T-cell (primary cell): ENCODE measurements at regions of chr11 and their contacts with region 1.

Region 1: DNA sequence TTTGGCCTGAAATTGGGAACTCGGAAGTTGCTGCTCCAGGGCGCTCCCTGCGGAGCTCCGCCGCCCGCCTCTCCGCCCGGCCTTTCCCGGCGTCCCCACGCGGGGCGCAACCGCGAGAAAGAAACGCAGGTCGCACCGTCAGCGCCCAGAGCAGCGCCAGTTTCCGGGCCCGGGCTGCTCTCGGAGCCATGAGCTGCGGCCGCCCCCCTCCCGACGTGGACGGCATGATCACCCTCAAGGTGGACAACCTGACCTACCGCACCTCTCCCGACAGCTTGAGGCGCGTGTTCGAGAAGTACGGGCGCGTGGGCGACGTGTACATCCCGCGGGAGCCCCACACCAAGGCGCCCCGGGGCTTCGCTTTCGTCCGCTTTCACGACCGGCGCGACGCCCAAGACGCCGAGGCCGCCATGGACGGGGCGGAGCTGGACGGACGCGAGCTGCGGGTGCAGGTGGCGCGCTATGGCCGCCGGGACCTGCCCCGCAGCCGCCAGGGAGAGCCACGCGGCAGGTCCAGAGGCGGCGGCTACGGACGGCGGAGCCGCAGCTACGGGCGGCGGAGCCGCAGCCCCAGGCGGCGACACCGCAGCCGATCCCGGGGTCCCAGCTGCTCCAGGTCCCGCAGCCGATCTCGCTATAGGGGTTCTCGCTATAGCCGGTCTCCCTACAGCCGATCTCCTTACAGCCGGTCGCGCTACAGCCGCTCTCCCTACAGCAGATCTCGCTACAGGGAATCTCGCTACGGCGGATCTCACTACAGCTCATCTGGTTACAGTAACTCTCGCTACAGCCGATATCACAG is 521 bp downstream of the SRSF8 start:
- DNase-seq: peak; percentile 34 to 83 (median 60)
- ATAC-seq: peak; percentile 74 to 78 (median 77)
- H3K4me3 ChIP-seq: peak overlapping the region; percentile 72 to 93
- H3K4me3 Mint-ChIP-seq: peak overlapping the region; percentile 94 to 100 (median 97)
- H3K27ac ChIP-seq: peak overlapping the region; percentile 91
- H3K27ac Mint-ChIP-seq: peak overlapping the region; percentile 97 to 99
- H3K4me1 ChIP-seq: peaks cover 9% of the 10 kb centered on the region in 2 experiments
- H3K4me1 Mint-ChIP-seq: peaks cover 30 to 40% (median 31%) of the 10 kb centered on the region in 3 donors
- H3K27me3 ChIP-seq: no peaks in the 10 kb centered on the region
- H3K27me3 Mint-ChIP-seq: no peaks in the 10 kb centered on the region

Region 2: DNA sequence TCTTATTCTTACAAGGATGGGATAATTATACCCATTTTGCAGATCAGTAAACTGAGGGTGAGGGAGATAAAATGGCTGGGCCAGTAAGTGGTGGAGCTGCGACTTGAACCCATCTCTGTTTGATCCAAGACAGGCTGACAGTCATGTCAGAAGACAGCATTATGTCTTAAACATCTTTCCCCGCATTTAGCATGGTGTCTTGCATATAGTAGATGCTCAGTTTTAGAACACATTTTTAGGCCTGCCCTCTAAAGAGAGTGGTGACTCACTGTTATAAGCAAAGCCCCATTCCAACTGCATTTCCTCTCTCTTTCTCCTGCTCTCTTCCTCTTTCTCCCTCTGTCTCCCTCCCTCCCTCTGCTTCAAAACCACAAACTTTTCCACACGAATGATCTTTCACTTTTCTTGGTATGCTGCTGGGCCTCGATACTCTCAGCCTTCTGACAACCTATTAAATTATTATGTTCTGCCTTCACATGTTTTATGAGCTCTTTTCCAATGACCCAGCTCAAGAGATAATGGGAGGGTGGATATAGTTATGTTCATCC is 119.1 kb before region 1 on chr11:
- CTCF ChIA-PET with region 1: no interaction called
- POLR2A ChIA-PET with region 1: no interaction called
- DNase-seq: no peak
- ATAC-seq: no peak
- H3K4me3 ChIP-seq: no peak overlapping the region
- H3K4me3 Mint-ChIP-seq: no peak overlapping the region
- H3K27ac ChIP-seq: no peak overlapping the region
- H3K27ac Mint-ChIP-seq: no peak overlapping the region
- H3K4me1 ChIP-seq: no peaks in the 10 kb centered on the region
- H3K4me1 Mint-ChIP-seq: peaks cover 0 to 2% (median 0%) of the 10 kb centered on the region in 3 donors
- H3K27me3 ChIP-seq: peaks cover 0 to 2% of the 10 kb centered on the region in 2 experiments
- H3K27me3 Mint-ChIP-seq: peaks cover 2 to 3% of the 10 kb centered on the region in 2 donors

Region 3: DNA sequence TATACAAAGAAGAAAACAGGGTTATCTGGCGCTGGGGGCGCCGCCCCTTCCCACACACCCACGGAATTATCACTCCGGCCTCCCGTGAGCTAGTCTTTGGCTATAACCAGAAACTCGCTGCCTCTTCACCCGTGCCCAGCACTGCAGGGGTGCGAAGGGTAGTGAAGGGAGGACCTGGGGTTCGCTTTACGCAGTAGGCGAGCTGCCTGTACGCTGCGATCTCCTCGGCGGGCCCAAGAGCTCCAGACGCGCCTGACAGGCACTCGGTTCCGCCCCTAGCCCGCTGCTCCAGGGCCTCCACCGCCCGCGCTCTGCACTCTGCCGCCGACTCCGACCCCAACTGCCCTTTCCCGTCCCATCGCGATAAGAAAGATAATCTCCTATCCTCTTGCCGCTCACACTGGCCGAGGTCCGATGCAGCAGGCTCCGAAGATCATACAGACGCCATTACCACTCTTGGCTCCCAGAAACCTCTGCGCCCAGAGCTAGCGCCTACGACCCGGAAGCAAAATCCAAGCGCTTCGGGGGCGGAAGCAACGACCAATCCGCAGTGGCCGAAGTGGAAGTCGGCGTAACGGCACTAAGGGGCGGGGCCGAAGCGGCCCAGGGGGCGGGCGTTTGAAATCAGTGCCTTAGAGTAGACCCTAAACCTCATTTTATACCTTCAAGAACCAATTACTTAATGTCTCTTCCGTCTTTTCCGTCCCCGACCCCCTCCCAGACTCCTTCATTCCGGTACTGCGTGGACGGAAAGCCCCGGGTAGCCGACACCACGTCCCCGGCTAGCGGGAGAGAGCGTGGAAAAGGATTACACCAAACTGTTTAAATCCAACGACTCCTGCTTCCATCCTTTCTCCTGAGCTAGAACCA is 93.9 kb before region 1 on chr11 and contains the starts of genes CWC15 and KDM4D:
- CTCF ChIA-PET with region 1: interaction called, 3 to 14 read pairs
- POLR2A ChIA-PET with region 1: interaction called, 3 to 4 read pairs
- DNase-seq: peak; percentile 89 to 96 (median 94)
- ATAC-seq: peak; percentile 99 to 100 (median 99)
- H3K4me3 ChIP-seq: peak within 1 kb of the TSS; percentile 88 to 95
- H3K4me3 Mint-ChIP-seq: peak within 1 kb of the TSS; percentile 94 to 99 (median 97)
- H3K27ac ChIP-seq: peak within 1 kb of the TSS; percentile 71
- H3K27ac Mint-ChIP-seq: peak within 1 kb of the TSS; percentile 93 to 96
- H3K4me1 ChIP-seq: peaks cover 3 to 8% of the 10 kb centered on the region in 2 experiments
- H3K4me1 Mint-ChIP-seq: peaks cover 33 to 40% (median 37%) of the 10 kb centered on the region in 3 donors
- H3K27me3 ChIP-seq: no peaks in the 10 kb centered on the region
- H3K27me3 Mint-ChIP-seq: no peaks in the 10 kb centered on the region
- total RNA-seq, gene CWC15: 56.4 to 91.0 (median 64.1) TPM
- total RNA-seq, gene KDM4D: 0.33 to 0.57 (median 0.50) TPM

Region 4: DNA sequence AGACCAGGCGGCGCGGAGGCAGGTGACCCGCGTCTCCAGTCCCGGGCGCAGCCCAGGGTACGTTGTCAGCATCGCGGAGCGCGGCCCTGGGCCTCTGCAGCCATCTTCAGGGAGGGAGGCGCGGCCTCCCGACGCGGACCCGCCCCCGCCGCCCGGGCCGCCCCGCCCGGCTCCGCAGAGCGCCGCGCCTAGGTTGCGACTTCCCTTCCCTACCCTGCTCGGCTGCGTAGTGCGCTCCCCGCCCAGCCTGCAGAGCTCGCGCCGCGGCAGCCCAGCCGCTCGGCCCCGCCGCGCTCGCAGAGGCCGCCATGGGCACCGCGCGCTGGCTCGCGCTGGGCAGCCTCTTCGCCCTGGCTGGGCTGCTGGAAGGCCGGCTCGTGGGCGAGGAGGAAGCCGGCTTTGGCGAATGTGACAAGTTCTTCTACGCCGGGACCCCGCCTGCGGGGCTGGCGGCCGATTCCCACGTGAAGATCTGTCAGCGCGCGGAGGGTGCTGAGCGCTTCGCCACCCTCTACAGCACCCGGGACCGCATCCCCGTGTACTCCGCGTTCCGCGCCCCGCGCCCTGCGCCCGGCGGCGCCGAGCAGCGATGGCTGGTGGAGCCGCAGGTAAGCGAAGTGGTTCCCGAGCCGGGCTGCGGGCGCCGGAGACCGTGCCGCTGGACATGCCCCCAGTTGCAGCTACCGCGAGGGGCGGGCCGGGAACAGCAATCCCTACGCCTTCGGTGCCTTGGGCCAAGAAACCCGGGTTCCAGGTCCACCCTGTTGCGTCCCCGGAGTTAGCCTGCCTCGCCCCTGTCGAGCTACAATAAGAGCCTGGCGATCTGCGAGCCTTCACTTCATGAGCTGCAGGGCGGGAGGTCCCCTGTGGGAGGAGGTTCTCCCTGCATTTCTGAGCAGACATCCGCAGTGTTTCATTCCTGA is 22.6 kb after region 1 on chr11 and contains the start of gene ENDOD1:
- CTCF ChIA-PET with region 1: interaction called, 10 to 73 read pairs
- POLR2A ChIA-PET with region 1: interaction called, 4 to 33 read pairs
- DNase-seq: peak; percentile 75 to 92 (median 83)
- ATAC-seq: peak; percentile 94 to 98 (median 95)
- H3K4me3 ChIP-seq: peak within 1 kb of the TSS; percentile 67 to 76
- H3K4me3 Mint-ChIP-seq: peak within 1 kb of the TSS; percentile 82 to 90 (median 90)
- H3K27ac ChIP-seq: peak within 1 kb of the TSS; percentile 80
- H3K27ac Mint-ChIP-seq: peak within 1 kb of the TSS; percentile 89 to 99
- H3K4me1 ChIP-seq: peaks cover 5 to 31% of the 10 kb centered on the region in 2 experiments
- H3K4me1 Mint-ChIP-seq: peaks cover 37 to 59% (median 50%) of the 10 kb centered on the region in 3 donors
- H3K27me3 ChIP-seq: no peaks in the 10 kb centered on the region
- H3K27me3 Mint-ChIP-seq: no peaks in the 10 kb centered on the region
- total RNA-seq, gene ENDOD1: 7.4 to 13.1 (median 9.8) TPM

Region 5: DNA sequence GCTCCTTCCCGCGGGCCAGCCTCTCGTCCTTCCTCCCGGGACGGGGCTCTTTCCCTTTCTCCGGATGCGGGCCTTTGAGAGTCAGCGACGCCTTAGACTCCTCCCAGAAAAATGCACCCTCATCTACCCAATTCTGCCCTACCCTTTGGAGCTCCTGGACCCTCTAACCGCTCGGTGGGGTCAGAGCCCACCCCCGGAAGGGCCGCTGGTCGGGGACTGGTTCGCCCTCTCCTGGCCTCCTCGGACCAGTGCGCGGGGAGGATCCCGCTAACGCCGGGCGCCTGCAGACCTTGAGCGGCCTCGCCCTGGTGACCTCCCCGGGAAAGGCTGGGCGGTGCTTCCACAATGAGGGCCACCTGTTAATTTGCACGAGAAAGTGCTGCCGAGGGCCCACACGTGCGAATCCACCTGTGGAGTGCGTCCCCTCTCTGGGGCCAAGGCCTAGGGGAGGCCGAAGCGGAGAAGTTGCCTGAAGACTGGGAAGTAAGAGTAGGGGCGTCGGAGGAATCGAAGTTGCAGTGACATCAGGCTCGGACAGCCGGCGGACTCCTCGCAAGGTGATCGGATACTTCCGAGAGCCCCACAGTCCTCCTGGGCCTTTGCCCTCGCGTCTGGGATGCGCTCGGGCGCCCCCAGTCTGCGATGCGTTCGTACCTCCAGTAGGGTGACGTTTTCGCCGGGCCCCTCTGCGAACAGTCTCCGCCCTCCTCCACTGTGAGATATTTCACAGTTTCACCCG is 83.9 kb after region 1 on chr11:
- CTCF ChIA-PET with region 1: interaction called, 5 to 12 read pairs
- POLR2A ChIA-PET with region 1: interaction called in 1 of 2 experiments, 19 read pairs
- DNase-seq: peak; percentile 79 to 96 (median 89)
- ATAC-seq: peak; percentile 90 to 94 (median 92)
- H3K4me3 ChIP-seq: peak overlapping the region; percentile 90 to 92
- H3K4me3 Mint-ChIP-seq: peak overlapping the region; percentile 82 to 91 (median 84)
- H3K27ac ChIP-seq: peak overlapping the region; percentile 87
- H3K27ac Mint-ChIP-seq: peak overlapping the region; percentile 99
- H3K4me1 ChIP-seq: peaks cover 11 to 43% of the 10 kb centered on the region in 2 experiments
- H3K4me1 Mint-ChIP-seq: peaks cover 35 to 40% (median 39%) of the 10 kb centered on the region in 3 donors
- H3K27me3 ChIP-seq: peaks cover 0 to 11% of the 10 kb centered on the region in 2 experiments
- H3K27me3 Mint-ChIP-seq: peaks cover 6% of the 10 kb centered on the region in 2 donors

Region 6: GRCh38 chr11:95790123-95790932 is 723.1 kb after region 1 on chr11 and contains the start of gene CEP57:
- CTCF ChIA-PET with region 1: interaction called in 1 of 2 experiments, 7 read pairs
- POLR2A ChIA-PET with region 1: interaction called, 3 to 19 read pairs
- DNase-seq: peak; percentile 86 to 98 (median 93)
- ATAC-seq: peak; percentile 67 to 70 (median 69)
- H3K4me3 ChIP-seq: peak within 1 kb of the TSS; percentile 92 to 95
- H3K4me3 Mint-ChIP-seq: peak within 1 kb of the TSS; percentile 96 to 99 (median 99)
- H3K27ac ChIP-seq: peak within 1 kb of the TSS; percentile 99
- H3K27ac Mint-ChIP-seq: peak within 1 kb of the TSS; percentile 100
- H3K4me1 ChIP-seq: peaks cover 19 to 23% of the 10 kb centered on the region in 2 experiments
- H3K4me1 Mint-ChIP-seq: peaks cover 56 to 69% (median 68%) of the 10 kb centered on the region in 3 donors
- H3K27me3 ChIP-seq: no peaks in the 10 kb centered on the region
- H3K27me3 Mint-ChIP-seq: no peaks in the 10 kb centered on the region
- total RNA-seq, gene CEP57: 57.6 to 69.6 (median 65.0) TPM